ENCODE measurements at regions of chr12 and their contacts with region 1.

Region 1: GRCh38 chr12:109713187-109713984 is at the start of gene FAM222A:
- DNase-seq: peak; percentile 99
- ATAC-seq: peak; percentile 84
- H3K4me3 ChIP-seq: peak within 1 kb of the TSS in 4 of 5 experiments; percentile 53 to 80 (median 64)
- H3K4me3 Mint-ChIP-seq: peak within 1 kb of the TSS; percentile 85
- H3K27ac ChIP-seq: peak within 1 kb of the TSS in 1 of 2 donors; percentile 52
- H3K27ac Mint-ChIP-seq: peak within 1 kb of the TSS; percentile 82
- H3K4me1 ChIP-seq: peaks cover 10 to 11% of the 10 kb centered on the region in 2 donors
- H3K4me1 Mint-ChIP-seq: peaks cover 11% of the 10 kb centered on the region
- H3K27me3 ChIP-seq: peaks cover 0 to 59% (median 23%) of the 10 kb centered on the region in 4 experiments
- H3K27me3 Mint-ChIP-seq: peaks cover 37% of the 10 kb centered on the region
- CTCF ChIP-seq: no peak
- total RNA-seq, gene FAM222A: 4.6 and 4.7 TPM in 2 replicates

Region 2: DNA sequence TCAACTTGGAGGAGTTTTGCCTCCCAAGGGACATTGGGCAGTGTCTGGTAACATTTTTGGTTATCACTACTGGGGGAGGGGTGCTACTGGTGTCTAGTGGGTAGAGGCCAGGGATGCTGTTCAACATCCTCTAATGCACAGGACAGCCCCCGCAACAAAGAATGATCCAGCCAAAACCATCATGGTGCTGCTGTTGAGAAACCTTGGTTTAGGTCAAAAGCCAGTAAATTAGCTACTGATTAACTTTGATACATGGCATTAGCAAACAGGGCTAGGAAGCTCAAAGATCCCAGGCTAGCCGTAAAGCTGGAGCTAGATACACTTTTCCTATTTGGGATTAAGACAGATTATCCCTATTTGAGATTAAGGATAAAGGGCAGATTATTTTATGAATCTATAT is 629.0 kb before region 1 on chr12:
- CTCF ChIA-PET with region 1: no interaction called
- POLR2A ChIA-PET with region 1: no interaction called
- intact Hi-C with region 1: no loop called
- DNase-seq: no peak
- ATAC-seq: no peak
- H3K4me3 ChIP-seq: no peak overlapping the region
- H3K4me3 Mint-ChIP-seq: no peak overlapping the region
- H3K27ac ChIP-seq: no peak overlapping the region
- H3K27ac Mint-ChIP-seq: no peak overlapping the region
- H3K4me1 ChIP-seq: no peaks in the 10 kb centered on the region
- H3K4me1 Mint-ChIP-seq: no peaks in the 10 kb centered on the region
- H3K27me3 ChIP-seq: no peaks in the 10 kb centered on the region
- H3K27me3 Mint-ChIP-seq: no peaks in the 10 kb centered on the region
- CTCF ChIP-seq: no peak

Region 3: DNA sequence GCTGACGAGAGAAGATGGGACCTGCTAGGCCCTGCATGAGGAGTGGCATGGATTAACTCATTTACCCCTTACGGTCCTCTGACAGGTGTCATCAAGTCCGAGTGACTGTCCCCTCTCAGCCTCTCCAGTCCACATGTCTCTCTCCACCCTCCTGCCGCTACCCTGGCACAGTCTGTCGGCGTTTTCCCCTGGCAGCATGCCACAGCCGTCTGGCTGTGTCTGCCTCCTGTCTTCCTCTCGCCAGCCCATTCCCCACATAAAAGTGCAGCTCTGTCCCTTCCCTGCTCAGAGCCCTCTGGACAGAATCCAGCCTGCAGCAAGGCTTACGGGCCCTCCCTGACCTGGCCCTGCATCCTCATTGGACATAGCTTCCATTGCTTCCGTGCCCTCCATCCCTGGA is 190.3 kb before region 1 on chr12:
- CTCF ChIA-PET with region 1: no interaction called
- POLR2A ChIA-PET with region 1: no interaction called
- intact Hi-C with region 1: no loop called
- DNase-seq: no peak
- ATAC-seq: no peak
- H3K4me3 ChIP-seq: no peak overlapping the region
- H3K4me3 Mint-ChIP-seq: no peak overlapping the region
- H3K27ac ChIP-seq: no peak overlapping the region
- H3K27ac Mint-ChIP-seq: no peak overlapping the region
- H3K4me1 ChIP-seq: no peaks in the 10 kb centered on the region
- H3K4me1 Mint-ChIP-seq: no peaks in the 10 kb centered on the region
- H3K27me3 ChIP-seq: no peaks in the 10 kb centered on the region
- H3K27me3 Mint-ChIP-seq: no peaks in the 10 kb centered on the region
- CTCF ChIP-seq: no peak

Region 4: DNA sequence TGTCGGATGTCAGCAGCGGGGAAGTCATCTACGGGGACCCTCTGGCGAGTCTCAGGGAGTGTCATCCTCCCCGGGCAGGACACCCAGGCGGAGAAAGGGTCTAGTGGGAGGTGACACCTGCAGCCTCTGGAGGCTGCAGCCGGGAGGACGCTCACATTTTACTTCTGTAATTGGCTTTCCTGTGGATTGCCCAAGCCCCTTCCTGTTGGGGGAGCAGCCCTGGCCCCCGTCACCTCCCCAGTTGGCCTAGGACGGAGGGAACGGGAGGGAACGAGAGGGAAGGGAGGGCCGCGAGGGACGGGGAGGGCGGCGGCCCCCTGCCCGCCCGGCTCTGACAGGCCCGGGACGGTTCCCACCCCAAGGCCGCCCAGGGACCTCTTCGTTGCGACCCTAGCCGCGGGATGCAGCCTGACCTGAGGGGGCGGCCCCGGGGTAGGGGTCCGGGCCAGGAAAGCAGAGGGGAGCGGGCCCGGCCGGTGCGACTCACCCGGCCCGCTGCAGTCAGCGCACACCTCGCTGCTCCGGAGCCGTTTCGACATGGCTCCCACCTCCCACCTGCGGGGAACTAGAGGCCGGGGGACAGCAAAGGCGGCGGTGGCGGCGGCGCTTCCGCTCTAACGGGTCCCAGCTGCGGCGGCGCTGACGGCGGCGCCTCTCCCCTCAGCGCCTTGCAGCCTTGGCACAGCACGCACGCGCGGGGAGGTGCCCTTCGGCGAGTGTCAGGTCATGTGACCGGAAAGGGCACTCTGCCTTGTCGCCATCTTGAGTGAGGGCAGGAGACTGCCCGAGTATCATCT is 282.5 kb after region 1 on chr12 and contains the start of gene GIT2:
- CTCF ChIA-PET with region 1: no interaction called
- POLR2A ChIA-PET with region 1: no interaction called
- intact Hi-C with region 1: loop called (anchors 5 kb)
- DNase-seq: peak; percentile 95
- ATAC-seq: peak; percentile 69
- H3K4me3 ChIP-seq: peak within 1 kb of the TSS; percentile 68 to 99 (median 74)
- H3K4me3 Mint-ChIP-seq: peak within 1 kb of the TSS; percentile 90
- H3K27ac ChIP-seq: peak within 1 kb of the TSS; percentile 69 to 90
- H3K27ac Mint-ChIP-seq: peak within 1 kb of the TSS; percentile 91
- H3K4me1 ChIP-seq: peaks cover 39 to 47% of the 10 kb centered on the region in 2 donors
- H3K4me1 Mint-ChIP-seq: peaks cover 67% of the 10 kb centered on the region
- H3K27me3 ChIP-seq: no peaks in the 10 kb centered on the region
- H3K27me3 Mint-ChIP-seq: no peaks in the 10 kb centered on the region
- CTCF ChIP-seq: no peak
- total RNA-seq, gene GIT2: 163 and 177 TPM in 2 replicates

Region 5: GRCh38 chr12:110403146-110403975 is 690.0 kb after region 1 on chr12 and contains the start of gene ANAPC7:
- CTCF ChIA-PET with region 1: no interaction called
- POLR2A ChIA-PET with region 1: no interaction called
- intact Hi-C with region 1: loop called (anchors 10 kb)
- DNase-seq: peak; percentile 92
- ATAC-seq: peak; percentile 93
- H3K4me3 ChIP-seq: peak within 1 kb of the TSS; percentile 85 to 100 (median 98)
- H3K4me3 Mint-ChIP-seq: peak within 1 kb of the TSS; percentile 99
- H3K27ac ChIP-seq: peak within 1 kb of the TSS; percentile 83 to 89
- H3K27ac Mint-ChIP-seq: peak within 1 kb of the TSS; percentile 99
- H3K4me1 ChIP-seq: peaks cover 13 to 18% of the 10 kb centered on the region in 2 donors
- H3K4me1 Mint-ChIP-seq: peaks cover 34% of the 10 kb centered on the region
- H3K27me3 ChIP-seq: no peaks in the 10 kb centered on the region
- H3K27me3 Mint-ChIP-seq: peaks cover 1% of the 10 kb centered on the region
- CTCF ChIP-seq: no peak
- total RNA-seq, gene ANAPC7: 68.4 and 68.8 TPM in 2 replicates

Measured in B cell (primary cell).